CD8-positive, alpha-beta memory T cell (primary cell): ENCODE measurements at regions of chr2 and their contacts with region 1.

Region 1: GRCh38 chr2:96344011-96344410 is 8.4 kb downstream of the NCAPH start:
- DNase-seq: peak in 3 of 5 donors; percentile 29 to 80 (median 68)
- H3K4me3 ChIP-seq: no peak overlapping the region
- H3K4me3 Mint-ChIP-seq: peak overlapping the region in 6 of 7 donors; percentile 67 to 80 (median 70)
- H3K27ac ChIP-seq: peak overlapping the region; percentile 32
- H3K27ac Mint-ChIP-seq: peak overlapping the region; percentile 85 to 98 (median 93)
- H3K4me1 ChIP-seq: peaks cover 46% of the 10 kb centered on the region
- H3K4me1 Mint-ChIP-seq: peaks cover 55 to 70% (median 66%) of the 10 kb centered on the region in 3 donors
- H3K27me3 ChIP-seq: no peaks in the 10 kb centered on the region
- H3K27me3 Mint-ChIP-seq: no peaks in the 10 kb centered on the region

Region 2: GRCh38 chr2:96315400-96316071 is 28.5 kb before region 1 on chr2:
- CTCF ChIA-PET with region 1: interaction called, 30 read pairs
- POLR2A ChIA-PET with region 1: interaction called, 11 read pairs
- DNase-seq: peak in 2 of 5 donors; percentile 13 to 18
- H3K4me3 ChIP-seq: no peak overlapping the region
- H3K4me3 Mint-ChIP-seq: peak overlapping the region; percentile 52 to 89 (median 72)
- H3K27ac ChIP-seq: no peak overlapping the region
- H3K27ac Mint-ChIP-seq: peak overlapping the region; percentile 87 to 98 (median 92)
- H3K4me1 ChIP-seq: peaks cover 18% of the 10 kb centered on the region
- H3K4me1 Mint-ChIP-seq: peaks cover 42 to 67% (median 57%) of the 10 kb centered on the region in 3 donors
- H3K27me3 ChIP-seq: no peaks in the 10 kb centered on the region
- H3K27me3 Mint-ChIP-seq: no peaks in the 10 kb centered on the region

Region 3: DNA sequence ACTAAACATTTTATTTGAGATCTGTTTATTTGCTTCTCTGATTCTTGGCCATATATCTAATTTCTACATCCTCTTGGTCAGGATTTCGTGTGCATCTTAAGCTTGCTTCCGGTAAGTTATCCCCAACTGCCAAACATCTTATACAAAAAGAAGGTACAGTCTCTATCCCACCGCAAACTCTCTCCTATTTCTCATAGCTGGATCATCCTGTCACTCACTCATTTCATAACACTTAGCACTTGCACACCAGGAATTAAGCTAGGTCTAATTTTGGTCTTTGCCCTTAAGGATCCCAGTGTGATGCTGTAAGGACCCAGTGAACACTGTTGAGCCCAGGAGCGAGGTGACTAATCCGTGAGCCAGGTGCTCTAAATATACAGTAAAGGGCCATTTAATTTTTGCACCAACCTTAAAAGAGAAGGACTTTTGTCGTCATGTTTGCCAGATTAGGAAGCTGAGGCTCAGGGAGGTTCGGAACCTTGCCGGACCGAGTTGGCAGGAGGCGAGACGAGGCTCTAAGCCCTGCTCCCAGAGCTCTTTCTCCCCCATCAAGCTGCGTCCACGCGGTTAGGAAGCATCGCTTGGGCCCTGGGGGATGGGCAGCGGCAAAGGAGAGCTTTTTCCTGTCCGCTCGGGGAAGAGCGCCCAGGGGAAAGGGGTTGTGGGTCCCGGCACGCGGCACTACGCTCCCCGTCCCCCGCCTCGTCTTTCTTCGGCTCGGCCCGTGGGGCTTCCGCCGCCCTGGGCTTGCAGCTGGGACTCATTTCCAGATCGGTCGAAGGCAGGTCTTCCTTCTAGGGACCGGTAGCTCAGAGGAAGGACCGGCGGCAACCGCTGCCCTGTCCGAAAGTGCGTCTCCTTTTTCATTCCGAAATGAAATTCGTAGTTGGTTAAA is 23.0 kb before region 1 on chr2:
- CTCF ChIA-PET with region 1: interaction called, 58 read pairs
- POLR2A ChIA-PET with region 1: interaction called, 11 read pairs
- DNase-seq: no peak
- H3K4me3 ChIP-seq: peak overlapping the region; percentile 47
- H3K4me3 Mint-ChIP-seq: peak overlapping the region; percentile 86 to 95 (median 91)
- H3K27ac ChIP-seq: peak overlapping the region; percentile 55
- H3K27ac Mint-ChIP-seq: peak overlapping the region; percentile 62 to 96 (median 81)
- H3K4me1 ChIP-seq: peaks cover 32% of the 10 kb centered on the region
- H3K4me1 Mint-ChIP-seq: peaks cover 57 to 76% (median 73%) of the 10 kb centered on the region in 3 donors
- H3K27me3 ChIP-seq: no peaks in the 10 kb centered on the region
- H3K27me3 Mint-ChIP-seq: no peaks in the 10 kb centered on the region